ENCODE measurements at regions of chr3 and their contacts with region 1.

Region 1: DNA sequence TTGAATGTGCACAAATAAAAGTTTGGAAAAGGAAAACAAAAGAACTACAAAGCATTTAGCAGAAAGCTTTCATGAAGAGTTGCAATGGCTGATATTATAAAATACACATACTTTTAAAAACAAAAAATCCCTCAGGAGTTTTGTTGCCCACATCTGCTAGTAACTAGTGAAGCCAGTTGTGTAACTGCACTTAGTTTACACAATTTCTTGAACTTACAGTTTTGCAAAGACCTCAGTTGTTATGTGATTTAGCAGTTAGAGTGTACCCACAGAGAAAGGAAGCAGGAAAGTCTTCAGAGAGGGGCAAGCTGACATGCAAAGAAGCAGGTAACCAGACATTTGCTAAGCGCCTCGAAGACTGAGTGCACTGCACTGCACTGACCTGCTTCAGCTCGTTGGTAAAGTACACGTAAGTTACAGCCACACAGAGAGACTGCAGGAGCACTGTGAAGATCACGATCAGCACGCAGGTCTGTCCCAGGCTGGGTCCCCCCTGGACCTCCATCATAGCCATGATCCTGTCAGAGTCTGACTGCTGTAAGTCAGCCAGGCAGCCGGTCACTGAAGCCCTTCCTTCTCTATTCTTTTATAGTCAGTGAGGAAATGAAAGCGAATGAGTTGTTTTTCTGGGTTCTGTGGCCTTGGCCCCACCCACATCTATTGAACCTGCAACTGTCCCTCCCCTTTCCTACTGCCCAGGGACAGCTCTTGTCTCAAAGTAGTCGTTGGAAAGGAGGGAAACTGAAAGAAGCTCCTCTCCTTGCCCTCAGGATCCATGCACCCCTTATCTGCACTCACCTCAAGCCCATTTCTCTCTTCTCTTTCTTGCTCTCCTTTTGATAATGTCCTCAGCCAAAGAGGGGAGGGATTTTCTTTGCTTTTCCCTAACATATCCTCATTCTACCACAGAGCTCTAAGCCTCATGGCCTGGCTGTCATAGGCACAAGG is at the start of gene TNFSF10:
- DNase-seq: peak; percentile 85
- H3K4me3 Mint-ChIP-seq: peak within 1 kb of the TSS; percentile 100
- H3K27ac Mint-ChIP-seq: peak within 1 kb of the TSS; percentile 87
- H3K4me1 Mint-ChIP-seq: peaks cover 45% of the 10 kb centered on the region
- H3K27me3 Mint-ChIP-seq: no peaks in the 10 kb centered on the region
- total RNA-seq, gene TNFSF10: 118 to 119 TPM

Region 2: GRCh38 chr3:172437713-172438112 is 85.4 kb before region 1 on chr3:
- CTCF ChIA-PET with region 1: no interaction called
- POLR2A ChIA-PET with region 1: no interaction called
- DNase-seq: no peak
- H3K4me3 Mint-ChIP-seq: no peak overlapping the region
- H3K27ac Mint-ChIP-seq: no peak overlapping the region
- H3K4me1 Mint-ChIP-seq: no peaks in the 10 kb centered on the region
- H3K27me3 Mint-ChIP-seq: peaks cover 37% of the 10 kb centered on the region

Region 3: DNA sequence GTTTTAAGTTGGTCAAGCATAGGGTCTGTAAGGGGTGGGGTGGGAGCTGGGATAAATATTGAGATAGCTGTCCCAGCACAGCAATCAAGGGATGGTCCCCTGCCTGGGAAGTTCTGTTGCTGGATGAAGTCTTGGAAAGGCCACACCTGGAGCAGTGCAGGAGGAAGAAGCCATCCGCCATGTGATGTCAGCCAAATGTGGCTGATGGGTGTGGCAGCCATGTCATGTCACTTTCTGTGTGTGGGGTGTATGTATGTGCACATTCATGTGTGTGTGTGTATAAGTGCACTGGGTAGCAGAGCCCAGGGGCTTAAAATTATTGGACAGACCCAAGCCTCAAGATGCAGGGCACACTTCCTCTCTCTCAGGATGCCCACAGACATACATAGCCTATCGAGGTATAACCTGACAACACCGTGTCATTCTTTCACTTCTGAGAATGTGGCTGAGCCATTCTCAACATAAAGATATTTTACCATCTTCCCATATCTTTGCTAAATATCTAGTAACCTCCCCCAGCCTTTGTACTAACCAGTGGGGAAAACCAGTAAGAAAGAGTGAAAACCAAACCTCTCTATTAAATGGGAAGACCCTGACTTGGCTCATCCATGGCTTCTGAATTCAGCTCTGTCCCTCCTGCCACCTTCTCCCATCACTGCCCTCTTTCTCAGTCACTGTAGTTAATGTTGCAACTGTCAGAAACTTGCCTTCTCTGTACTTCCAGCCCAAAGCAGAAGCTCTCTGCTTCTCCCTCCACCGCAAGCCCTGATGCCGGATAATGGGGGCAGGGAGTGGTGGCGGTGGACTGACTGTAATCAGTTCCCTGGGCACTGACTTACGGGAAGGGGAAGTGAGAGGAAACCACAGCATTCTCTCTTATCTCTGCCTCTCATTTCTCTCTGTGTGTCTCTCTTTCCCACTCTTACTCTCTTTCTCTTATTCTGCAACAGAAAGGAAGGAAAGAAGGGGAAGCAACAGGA is 11.1 kb before region 1 on chr3:
- CTCF ChIA-PET with region 1: interaction called, 3 read pairs
- POLR2A ChIA-PET with region 1: interaction called, 61 read pairs
- DNase-seq: peak; percentile 79
- H3K4me3 Mint-ChIP-seq: peak overlapping the region; percentile 52
- H3K27ac Mint-ChIP-seq: peak overlapping the region; percentile 87
- H3K4me1 Mint-ChIP-seq: peaks cover 83% of the 10 kb centered on the region
- H3K27me3 Mint-ChIP-seq: no peaks in the 10 kb centered on the region

Region 4: DNA sequence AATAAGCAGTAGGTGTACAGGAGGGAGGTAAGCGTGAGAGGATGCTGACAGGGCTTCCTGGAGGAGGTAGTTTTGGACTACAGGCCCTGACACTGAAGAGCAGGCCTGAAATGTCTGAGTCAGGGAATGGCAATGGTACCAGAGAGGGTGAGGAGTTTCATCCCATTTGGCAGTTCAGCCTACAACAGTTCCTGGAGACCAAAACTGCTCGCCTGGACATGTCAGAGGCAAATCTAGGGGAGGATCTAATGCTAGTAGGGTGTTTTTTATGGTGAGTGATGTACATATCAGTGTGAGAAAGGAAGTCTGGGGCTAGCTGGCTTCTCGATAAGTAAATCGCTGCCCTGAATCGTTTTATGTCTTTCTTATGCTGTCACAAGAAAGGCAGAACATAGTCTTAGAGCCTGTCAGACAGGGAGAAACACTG is 13.9 kb after region 1 on chr3:
- CTCF ChIA-PET with region 1: no interaction called
- POLR2A ChIA-PET with region 1: interaction called, 21 read pairs
- DNase-seq: no peak
- H3K4me3 Mint-ChIP-seq: no peak overlapping the region
- H3K27ac Mint-ChIP-seq: peak overlapping the region; percentile 87
- H3K4me1 Mint-ChIP-seq: peaks cover 48% of the 10 kb centered on the region
- H3K27me3 Mint-ChIP-seq: no peaks in the 10 kb centered on the region

Region 5: DNA sequence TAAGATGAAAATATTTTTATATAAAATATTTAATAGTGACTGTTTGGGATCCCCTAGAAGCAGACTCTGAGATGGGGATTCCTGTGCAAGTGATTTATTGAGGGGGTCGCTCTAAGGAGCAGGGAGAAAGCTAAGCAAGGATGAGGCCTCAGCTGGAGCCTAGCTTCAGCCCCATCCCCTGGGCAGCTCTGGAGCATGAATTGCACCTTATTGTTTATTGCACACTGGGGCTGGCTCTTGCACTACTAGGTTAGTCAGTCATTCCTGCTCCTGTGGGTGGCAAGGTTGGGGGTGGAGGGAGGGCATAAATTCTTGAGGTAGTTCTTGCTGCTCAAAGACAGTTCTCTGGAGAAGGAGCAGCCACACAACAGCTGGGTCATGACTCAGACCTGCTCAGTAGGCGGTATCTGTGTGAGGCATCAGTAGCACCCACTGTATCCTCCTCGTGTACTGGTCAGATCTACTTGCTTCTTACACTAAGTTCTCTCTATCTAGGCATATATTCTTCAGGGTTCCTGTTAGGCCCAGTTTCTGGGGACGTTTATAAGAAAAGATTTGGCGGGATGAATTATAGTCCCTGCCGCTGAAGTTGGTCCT is 27.3 kb after region 1 on chr3:
- CTCF ChIA-PET with region 1: no interaction called
- POLR2A ChIA-PET with region 1: interaction called, 13 read pairs
- DNase-seq: peak; percentile 81
- H3K4me3 Mint-ChIP-seq: peak overlapping the region; percentile 18
- H3K27ac Mint-ChIP-seq: peak overlapping the region; percentile 51
- H3K4me1 Mint-ChIP-seq: peaks cover 44% of the 10 kb centered on the region
- H3K27me3 Mint-ChIP-seq: no peaks in the 10 kb centered on the region

Region 6: DNA sequence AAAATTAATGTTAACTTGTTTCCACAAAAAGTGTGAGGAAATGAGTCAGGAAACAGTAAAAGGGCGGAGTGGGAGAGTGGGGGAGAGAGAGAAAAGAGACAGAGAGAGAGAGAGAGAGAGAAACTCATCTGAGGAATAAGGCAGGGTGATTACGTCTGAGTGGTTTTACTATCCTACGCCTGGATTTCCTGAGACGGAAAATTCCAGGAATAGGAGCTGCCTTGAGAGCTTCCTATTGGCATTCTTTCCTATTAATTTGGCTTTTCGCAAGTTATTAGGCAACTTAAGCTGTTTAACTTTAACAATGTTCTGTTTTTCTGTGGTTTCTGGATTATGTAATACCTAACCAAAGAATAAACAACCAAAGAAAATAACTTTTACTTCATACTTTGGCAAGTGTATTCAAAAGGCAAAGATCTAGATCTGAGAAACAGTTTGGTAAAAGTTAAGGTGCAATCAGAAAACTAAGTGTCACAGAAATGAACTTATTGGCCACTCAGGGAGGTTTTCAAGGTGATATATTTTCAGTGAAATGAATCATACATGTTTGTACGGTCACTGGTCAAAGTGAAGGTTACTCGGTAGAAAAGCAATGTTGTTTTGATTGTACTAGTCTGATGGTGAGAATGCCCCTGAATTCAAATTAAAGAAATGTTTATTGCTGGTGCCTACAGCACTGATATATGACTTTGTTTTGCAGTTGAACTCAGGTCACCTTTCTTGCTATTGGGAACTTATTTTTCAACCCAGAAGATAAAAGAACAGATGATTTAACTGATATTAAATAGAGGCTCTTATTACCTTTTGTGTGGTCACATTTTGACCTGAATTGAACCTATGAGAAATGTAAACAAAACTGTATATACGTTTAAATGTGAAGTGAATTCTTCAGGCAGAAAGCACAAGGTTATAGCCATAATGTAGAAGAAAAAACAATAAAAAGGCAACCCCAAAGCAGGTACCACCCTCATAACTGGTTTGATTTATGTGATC is 40.0 kb after region 1 on chr3:
- CTCF ChIA-PET with region 1: interaction called, 3 read pairs
- POLR2A ChIA-PET with region 1: interaction called, 23 read pairs
- DNase-seq: peak; percentile 32
- H3K4me3 Mint-ChIP-seq: peak overlapping the region; percentile 63
- H3K27ac Mint-ChIP-seq: peak overlapping the region; percentile 84
- H3K4me1 Mint-ChIP-seq: peaks cover 32% of the 10 kb centered on the region
- H3K27me3 Mint-ChIP-seq: no peaks in the 10 kb centered on the region

Region 7: DNA sequence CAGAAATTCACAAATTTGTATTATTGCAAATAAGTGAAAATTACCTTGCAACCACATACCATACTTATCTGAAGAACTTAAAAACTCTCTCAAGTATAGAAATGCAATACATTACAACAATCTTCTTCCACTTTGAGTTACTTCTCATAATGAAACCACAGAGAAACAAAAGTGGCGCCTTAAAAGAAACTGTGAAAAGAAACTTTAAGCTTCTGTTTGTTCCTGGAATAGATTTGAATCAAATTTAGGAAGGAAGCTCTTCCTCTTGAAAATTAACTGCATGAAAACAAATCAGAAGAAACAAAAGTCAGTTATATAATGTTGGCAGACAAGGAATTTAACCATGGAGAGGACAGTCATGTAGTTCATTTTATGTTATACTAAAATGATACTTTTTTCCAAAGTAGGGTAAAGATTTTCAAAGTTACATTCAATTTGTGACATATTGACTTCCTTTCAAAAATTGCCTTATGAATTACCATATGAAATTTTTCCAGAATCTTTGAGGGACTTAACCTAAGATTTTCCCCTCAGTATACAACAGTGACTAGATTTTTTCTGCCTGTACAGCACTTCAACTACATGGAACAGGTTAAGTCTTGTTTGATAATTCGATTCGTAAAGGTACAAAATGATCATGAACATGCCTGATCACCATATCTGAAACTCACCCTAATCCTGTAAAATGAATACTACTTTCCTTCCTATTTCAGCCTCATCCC is 57.7 kb after region 1 on chr3:
- CTCF ChIA-PET with region 1: interaction called, 7 read pairs
- POLR2A ChIA-PET with region 1: interaction called, 54 read pairs
- DNase-seq: no peak
- H3K4me3 Mint-ChIP-seq: peak overlapping the region; percentile 49
- H3K27ac Mint-ChIP-seq: peak overlapping the region; percentile 91
- H3K4me1 Mint-ChIP-seq: peaks cover 92% of the 10 kb centered on the region
- H3K27me3 Mint-ChIP-seq: no peaks in the 10 kb centered on the region

Region 8: DNA sequence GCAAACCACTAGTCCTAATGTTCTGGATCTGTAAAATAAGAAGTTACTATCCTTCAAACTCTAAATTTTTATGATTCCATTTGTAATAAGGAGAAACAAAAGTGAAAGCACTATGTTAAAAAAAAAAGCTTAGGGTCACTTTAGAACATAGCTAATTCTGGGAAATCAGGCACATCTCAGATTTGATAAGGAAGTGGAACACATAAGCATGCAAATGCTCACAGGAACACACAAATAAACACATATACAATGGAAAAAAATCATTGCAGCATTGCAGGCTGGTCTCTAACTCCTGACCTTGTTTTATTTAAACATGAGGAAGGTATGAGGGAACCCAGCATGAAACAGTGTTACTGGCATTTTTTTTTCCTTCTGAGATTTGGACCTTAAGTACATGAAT is 63.3 kb after region 1 on chr3:
- CTCF ChIA-PET with region 1: interaction called, 7 read pairs
- POLR2A ChIA-PET with region 1: interaction called, 149 read pairs
- DNase-seq: no peak
- H3K4me3 Mint-ChIP-seq: no peak overlapping the region
- H3K27ac Mint-ChIP-seq: peak overlapping the region; percentile 61
- H3K4me1 Mint-ChIP-seq: peaks cover 88% of the 10 kb centered on the region
- H3K27me3 Mint-ChIP-seq: no peaks in the 10 kb centered on the region